ENCODE measurements at regions of chr15 and their contacts with region 1.

Region 1: DNA sequence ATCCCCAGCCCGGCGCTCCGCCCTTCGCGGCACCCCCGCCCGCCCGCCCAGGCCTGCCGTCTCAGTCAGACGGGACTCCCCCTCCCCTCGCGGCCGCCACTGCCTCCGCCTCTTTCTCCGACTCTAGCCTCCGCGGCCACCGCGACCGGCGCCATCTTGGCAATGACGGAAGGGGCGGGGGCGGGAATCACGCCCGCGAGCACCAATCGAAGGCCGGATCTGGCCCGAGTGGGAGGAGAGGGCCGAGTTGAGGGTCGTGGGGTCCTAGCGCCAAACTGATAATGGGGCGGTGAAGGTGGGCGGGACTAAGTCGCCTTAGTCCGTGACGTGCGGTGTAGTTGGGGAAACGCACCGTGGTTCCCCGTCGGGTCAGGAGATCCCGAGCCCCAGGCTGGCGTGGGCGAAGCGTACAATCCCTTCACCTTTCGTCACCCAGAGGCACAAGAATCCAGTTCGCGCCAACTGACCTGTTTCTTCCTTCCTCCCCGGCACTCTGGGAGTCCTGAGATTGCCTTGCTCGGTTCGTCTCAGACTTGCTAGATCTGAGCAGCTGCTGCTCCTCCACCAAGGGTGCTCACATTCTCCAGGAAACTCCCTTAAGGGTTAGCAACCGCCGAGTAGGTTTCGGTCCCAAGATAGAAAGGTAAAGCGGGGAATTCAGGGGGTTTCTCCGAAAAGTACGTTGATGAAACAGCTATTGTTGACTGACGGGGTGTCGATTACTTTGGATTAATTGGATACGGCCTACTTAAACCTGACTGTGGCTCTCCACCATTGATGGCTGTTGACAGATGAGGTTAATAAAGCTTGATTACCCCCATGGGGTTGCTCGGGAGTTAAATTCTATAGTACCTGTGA is at the start of gene DENND4A:
- DNase-seq: peak; percentile 99
- ATAC-seq: peak; percentile 98
- total RNA-seq, gene DENND4A: 12.7 TPM

Region 2: DNA sequence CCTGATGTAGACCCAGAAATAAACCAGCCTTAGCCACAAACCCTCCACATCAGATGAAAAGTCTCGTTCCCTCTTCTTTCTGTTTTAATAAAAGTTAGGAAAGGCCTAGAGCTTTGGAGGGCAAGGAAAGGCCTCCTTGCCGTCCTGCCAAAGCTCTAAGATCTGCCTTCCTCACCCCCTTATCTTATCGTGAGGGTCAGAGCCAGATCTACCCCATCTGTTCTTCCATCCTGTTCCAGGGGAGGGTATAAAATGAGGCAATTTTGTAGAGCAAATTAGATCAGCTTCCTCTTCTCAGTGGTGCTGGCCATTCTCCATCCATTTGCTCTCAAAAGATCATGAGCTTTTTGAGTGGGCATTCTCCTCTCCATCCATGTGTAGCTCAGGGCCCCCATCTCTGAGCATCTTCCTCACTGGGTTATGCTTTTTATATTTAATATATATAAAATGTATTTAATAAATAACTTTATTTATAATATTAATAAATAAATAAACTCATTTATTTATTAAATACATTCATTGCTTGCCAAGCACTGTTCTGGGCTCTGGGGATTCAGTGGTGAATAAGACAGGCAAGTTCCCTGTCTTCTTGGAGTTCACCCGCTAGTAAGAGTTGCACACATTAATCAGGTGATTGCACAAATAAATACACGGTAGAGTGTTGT is 172.6 kb before region 1 on chr15:
- intact Hi-C with region 1: no loop called
- DNase-seq: no peak
- ATAC-seq: no peak

Region 3: DNA sequence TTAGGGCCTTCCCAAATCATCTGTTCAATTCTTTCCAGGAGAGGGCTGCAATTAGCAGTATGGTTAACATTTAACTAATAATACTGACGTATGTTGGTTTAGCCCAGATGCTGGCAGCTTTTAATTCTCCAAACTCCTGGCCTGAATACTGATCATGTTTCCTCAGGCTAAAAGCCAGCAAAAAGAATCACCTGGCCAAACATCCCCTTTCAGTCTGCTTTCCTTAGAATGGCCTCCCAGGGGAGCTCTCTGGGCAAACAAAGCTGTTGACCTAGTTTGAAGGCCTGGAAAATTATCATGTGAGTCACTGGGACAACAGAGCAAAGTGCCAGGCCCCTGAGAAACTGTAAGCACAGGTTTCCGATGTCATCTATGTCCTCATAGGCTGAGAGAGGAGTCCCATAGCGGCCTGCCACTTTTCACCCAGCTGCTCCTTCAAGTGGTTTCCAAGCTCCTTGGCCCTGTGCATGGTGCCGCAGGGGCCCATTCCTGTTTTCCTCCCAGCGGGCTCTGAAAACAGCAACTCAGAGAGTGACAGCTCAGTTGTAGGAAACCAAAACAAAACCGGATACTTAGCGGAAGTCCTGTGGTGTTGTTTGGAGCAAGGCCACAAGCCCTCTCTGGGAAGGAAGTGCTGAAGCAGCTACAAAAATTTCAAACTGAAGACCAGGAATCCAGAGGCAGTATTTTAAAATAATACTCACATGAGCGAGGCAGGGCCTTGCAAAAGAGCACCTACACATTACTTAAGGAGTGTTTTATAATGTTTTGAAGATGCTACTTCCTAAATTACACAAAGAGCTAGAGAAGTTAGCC is 40.4 kb after region 1 on chr15:
- intact Hi-C with region 1: loop called (anchors 2 kb)
- DNase-seq: peak; percentile 86
- ATAC-seq: peak; percentile 91

Region 4: DNA sequence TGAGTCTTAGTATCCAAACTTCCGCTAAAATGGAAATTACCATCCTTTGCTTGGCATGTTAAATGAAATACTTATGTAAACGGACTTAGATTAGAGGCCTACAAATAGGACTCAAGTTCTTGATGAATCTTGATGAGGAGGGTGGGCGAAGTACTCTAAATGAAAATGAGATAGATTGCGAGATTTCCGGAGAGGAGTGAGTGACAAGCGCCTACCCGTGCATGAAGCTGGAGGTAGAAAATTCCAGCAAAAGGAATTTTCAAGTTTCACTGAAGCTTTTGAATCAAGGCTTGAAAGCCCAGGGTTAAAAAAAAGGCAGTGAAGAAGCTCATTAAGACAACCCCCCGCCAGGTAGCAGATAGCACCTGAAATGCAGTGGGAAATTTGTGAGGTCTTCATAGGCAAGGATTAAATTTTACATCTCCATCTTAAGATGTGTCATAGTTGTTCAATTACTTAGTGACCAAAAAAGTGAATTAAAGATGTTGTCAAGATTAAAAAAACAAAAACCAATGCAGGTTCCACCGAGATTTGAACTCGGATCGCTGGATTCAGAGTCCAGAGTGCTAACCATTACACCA is 76.3 kb after region 1 on chr15:
- intact Hi-C with region 1: loop called (anchors 1 kb)
- DNase-seq: no peak
- ATAC-seq: no peak